Activated naive CD4-positive, alpha-beta T cell treated with anti-CD3 and anti-CD28 coated beads, Interleukin-2, amount 10 ng/mL, durations not matched to agents 7 days and 5 days (primary cell): ENCODE measurements at regions of chr1 and their contacts with region 1.

Region 1: DNA sequence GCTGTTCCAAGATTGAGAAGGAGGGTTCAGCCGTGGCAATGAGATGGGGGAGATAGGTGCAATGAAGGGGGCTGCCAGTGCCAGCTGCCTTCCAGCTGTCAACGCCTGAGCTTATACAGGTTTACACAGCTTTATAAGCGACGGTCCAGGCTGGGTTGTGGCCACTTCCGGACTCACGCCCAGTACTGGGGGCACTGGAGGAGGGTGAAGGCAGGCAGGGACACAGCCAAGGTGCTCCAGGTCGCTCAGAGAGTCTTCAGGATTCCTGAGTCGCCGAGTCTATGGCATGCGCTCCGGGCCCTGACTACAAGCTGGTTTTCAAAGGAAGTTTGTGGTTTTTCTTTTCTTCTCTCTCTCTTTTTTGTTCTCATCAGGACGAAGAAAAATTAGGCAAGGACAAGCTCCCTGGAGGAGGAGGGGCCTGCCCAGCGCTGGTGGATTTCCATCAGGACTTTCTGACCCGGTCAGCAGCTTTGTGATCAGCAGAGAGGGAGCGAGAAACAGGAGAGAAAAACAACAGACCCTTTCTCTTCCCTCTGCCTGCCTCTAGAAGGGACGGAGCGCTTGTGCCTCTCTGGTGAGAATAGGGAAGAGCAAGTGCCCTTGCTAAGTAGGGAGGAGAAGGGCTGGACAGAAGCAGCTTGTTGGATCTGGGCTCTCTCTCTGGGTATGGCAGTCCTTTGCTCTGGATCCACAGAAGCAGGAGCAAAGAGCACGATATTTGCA is at the start of gene MINDY1:
- DNase-seq: peak; percentile 58
- H3K4me3 Mint-ChIP-seq: peak within 1 kb of the TSS; percentile 96
- H3K27ac Mint-ChIP-seq: peak within 1 kb of the TSS; percentile 93
- H3K4me1 Mint-ChIP-seq: peaks cover 90% of the 10 kb centered on the region
- H3K27me3 Mint-ChIP-seq: no peaks in the 10 kb centered on the region

Region 2: GRCh38 chr1:150979092-150980056 is 27.1 kb before region 1 on chr1:
- CTCF ChIA-PET with region 1: interaction called, 15 read pairs
- DNase-seq: peak; percentile 94
- H3K4me3 Mint-ChIP-seq: peak overlapping the region; percentile 38
- H3K27ac Mint-ChIP-seq: peak overlapping the region; percentile 37
- H3K4me1 Mint-ChIP-seq: peaks cover 44% of the 10 kb centered on the region
- H3K27me3 Mint-ChIP-seq: peaks cover 27% of the 10 kb centered on the region

Region 3: GRCh38 chr1:150995896-150996295 is 10.6 kb before region 1 on chr1:
- CTCF ChIA-PET with region 1: interaction called, 38 read pairs
- DNase-seq: peak; percentile 52
- H3K4me3 Mint-ChIP-seq: no peak overlapping the region
- H3K27ac Mint-ChIP-seq: peak overlapping the region; percentile 52
- H3K4me1 Mint-ChIP-seq: peaks cover 18% of the 10 kb centered on the region
- H3K27me3 Mint-ChIP-seq: no peaks in the 10 kb centered on the region

Region 4: GRCh38 chr1:151047925-151048645 is 41.6 kb after region 1 on chr1:
- CTCF ChIA-PET with region 1: interaction called, 10 read pairs
- DNase-seq: peak; percentile 75
- H3K4me3 Mint-ChIP-seq: peak overlapping the region; percentile 77
- H3K27ac Mint-ChIP-seq: peak overlapping the region; percentile 76
- H3K4me1 Mint-ChIP-seq: peaks cover 73% of the 10 kb centered on the region
- H3K27me3 Mint-ChIP-seq: no peaks in the 10 kb centered on the region